ENCODE measurements at regions of chr4 and their contacts with region 1.

Region 1: DNA sequence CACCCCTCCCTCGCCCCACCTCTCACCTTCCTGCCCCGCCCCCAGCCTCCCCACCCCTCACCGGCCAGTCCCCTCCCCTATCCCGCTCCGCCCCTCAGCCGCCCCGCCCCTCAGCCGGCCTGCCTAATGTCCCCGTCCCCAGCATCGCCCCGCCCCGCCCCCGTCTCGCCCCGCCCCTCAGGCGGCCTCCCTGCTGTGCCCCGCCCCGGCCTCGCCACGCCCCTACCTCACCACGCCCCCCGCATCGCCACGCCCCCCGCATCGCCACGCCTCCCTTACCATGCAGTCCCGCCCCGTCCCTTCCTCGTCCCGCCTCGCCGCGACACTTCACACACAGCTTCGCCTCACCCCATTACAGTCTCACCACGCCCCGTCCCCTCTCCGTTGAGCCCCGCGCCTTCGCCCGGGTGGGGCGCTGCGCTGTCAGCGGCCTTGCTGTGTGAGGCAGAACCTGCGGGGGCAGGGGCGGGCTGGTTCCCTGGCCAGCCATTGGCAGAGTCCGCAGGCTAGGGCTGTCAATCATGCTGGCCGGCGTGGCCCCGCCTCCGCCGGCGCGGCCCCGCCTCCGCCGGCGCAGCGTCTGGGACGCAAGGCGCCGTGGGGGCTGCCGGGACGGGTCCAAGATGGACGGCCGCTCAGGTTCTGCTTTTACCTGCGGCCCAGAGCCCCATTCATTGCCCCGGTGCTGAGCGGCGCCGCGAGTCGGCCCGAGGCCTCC is at the starts of genes HTT and HTT-AS:
- DNase-seq: peak; percentile 93 to 99 (median 98)
- ATAC-seq: peak; percentile 84
- H3K4me3 ChIP-seq: peak within 1 kb of the TSS; percentile 80
- H3K4me3 Mint-ChIP-seq: peak within 1 kb of the TSS; percentile 92
- H3K27ac ChIP-seq: peak within 1 kb of the TSS; percentile 72 to 87
- H3K27ac Mint-ChIP-seq: peak within 1 kb of the TSS; percentile 86
- H3K4me1 ChIP-seq: peaks cover 23% of the 10 kb centered on the region
- H3K4me1 Mint-ChIP-seq: peaks cover 26% of the 10 kb centered on the region
- H3K27me3 ChIP-seq: no peaks in the 10 kb centered on the region
- H3K27me3 Mint-ChIP-seq: no peaks in the 10 kb centered on the region
- CTCF ChIP-seq: no peak
- total RNA-seq, gene HTT: 56.9 to 62.6 TPM
- total RNA-seq, gene HTT-AS: not detected

Region 2: DNA sequence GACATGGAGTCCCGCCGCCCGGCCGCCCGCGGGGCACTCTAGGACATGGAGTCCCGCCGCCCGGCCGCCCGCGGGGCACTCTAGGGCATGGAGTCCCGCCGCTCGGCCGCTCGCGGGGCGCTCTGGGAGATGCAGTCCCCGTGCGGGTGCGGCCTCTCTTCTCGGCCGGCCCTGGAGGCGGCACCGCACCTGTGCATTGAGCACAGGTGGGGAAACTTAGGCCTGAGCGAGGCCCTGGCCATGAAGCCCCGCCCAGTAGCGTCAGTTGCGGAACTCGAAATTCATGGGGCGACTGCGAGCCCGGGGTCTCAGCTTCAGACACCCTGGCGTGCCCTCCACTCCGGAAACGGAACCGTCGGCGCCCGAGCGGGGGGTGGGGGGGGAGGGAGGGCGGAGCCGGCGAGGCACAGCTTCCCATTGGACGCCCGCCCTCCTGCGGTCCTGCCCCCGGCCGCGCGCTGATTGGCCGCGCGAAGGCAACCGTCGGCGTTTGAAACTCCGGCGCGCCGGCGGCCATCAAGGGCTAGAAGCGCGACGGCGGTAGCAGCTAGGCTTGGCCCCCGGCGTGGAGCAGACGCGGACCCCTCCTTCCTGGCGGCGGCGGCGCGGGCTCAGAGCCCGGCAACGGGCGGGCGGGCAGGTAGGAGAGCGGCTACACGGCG is 1353.1 kb before region 1 on chr4 and contains the starts of genes TACC3 and TMEM129:
- CTCF ChIA-PET with region 1: no interaction called
- POLR2A ChIA-PET with region 1: no interaction called
- intact Hi-C with region 1: loop called in 1 of 2 experiments (anchors 10 kb)
- DNase-seq: peak; percentile 90 to 99 (median 95)
- ATAC-seq: peak; percentile 80
- H3K4me3 ChIP-seq: peak within 1 kb of the TSS; percentile 53
- H3K4me3 Mint-ChIP-seq: peak within 1 kb of the TSS; percentile 92
- H3K27ac ChIP-seq: peak within 1 kb of the TSS; percentile 85 to 88
- H3K27ac Mint-ChIP-seq: peak within 1 kb of the TSS; percentile 99
- H3K4me1 ChIP-seq: peaks cover 77% of the 10 kb centered on the region
- H3K4me1 Mint-ChIP-seq: peaks cover 56% of the 10 kb centered on the region
- H3K27me3 ChIP-seq: no peaks in the 10 kb centered on the region
- H3K27me3 Mint-ChIP-seq: no peaks in the 10 kb centered on the region
- CTCF ChIP-seq: no peak
- total RNA-seq, gene TACC3: 123 TPM
- total RNA-seq, gene TMEM129: 17.2 to 17.6 TPM

Region 3: GRCh38 chr4:2008875-2009703 is 1065.1 kb before region 1 on chr4 and contains the start of gene NELFA:
- CTCF ChIA-PET with region 1: no interaction called
- POLR2A ChIA-PET with region 1: no interaction called
- intact Hi-C with region 1: loop called in 1 of 2 experiments (anchors 2 kb)
- DNase-seq: peak; percentile 93 to 98 (median 95)
- ATAC-seq: peak; percentile 79
- H3K4me3 ChIP-seq: peak within 1 kb of the TSS; percentile 87
- H3K4me3 Mint-ChIP-seq: peak within 1 kb of the TSS; percentile 98
- H3K27ac ChIP-seq: peak within 1 kb of the TSS; percentile 97 to 99
- H3K27ac Mint-ChIP-seq: peak within 1 kb of the TSS; percentile 95
- H3K4me1 ChIP-seq: peaks cover 31% of the 10 kb centered on the region
- H3K4me1 Mint-ChIP-seq: peaks cover 39% of the 10 kb centered on the region
- H3K27me3 ChIP-seq: no peaks in the 10 kb centered on the region
- H3K27me3 Mint-ChIP-seq: no peaks in the 10 kb centered on the region
- CTCF ChIP-seq: no peak
- total RNA-seq, gene NELFA: 39.9 to 40.1 TPM

Region 4: GRCh38 chr4:3041192-3042142 is 32.8 kb before region 1 on chr4:
- CTCF ChIA-PET with region 1: no interaction called
- POLR2A ChIA-PET with region 1: interaction called, 18 read pairs
- intact Hi-C with region 1: loop called in 1 of 2 experiments (anchors 2 kb)
- DNase-seq: peak in 11 of 14 experiments; percentile 13 to 79 (median 27)
- ATAC-seq: peak; percentile 37
- H3K4me3 ChIP-seq: peak overlapping the region; percentile 58
- H3K4me3 Mint-ChIP-seq: peak overlapping the region; percentile 90
- H3K27ac ChIP-seq: peak overlapping the region in 1 of 2 donors; percentile 51
- H3K27ac Mint-ChIP-seq: peak overlapping the region; percentile 82
- H3K4me1 ChIP-seq: peaks cover 71% of the 10 kb centered on the region
- H3K4me1 Mint-ChIP-seq: peaks cover 54% of the 10 kb centered on the region
- H3K27me3 ChIP-seq: no peaks in the 10 kb centered on the region
- H3K27me3 Mint-ChIP-seq: peaks cover 12% of the 10 kb centered on the region
- CTCF ChIP-seq: no peak

Region 5: GRCh38 chr4:3059943-3060342 is 14.3 kb before region 1 on chr4:
- CTCF ChIA-PET with region 1: no interaction called
- POLR2A ChIA-PET with region 1: no interaction called
- intact Hi-C with region 1: no loop called
- DNase-seq: no peak
- ATAC-seq: no peak
- H3K4me3 ChIP-seq: no peak overlapping the region
- H3K4me3 Mint-ChIP-seq: no peak overlapping the region
- H3K27ac ChIP-seq: no peak overlapping the region
- H3K27ac Mint-ChIP-seq: no peak overlapping the region
- H3K4me1 ChIP-seq: no peaks in the 10 kb centered on the region
- H3K4me1 Mint-ChIP-seq: no peaks in the 10 kb centered on the region
- H3K27me3 ChIP-seq: peaks cover 0 to 3% of the 10 kb centered on the region in 2 experiments
- H3K27me3 Mint-ChIP-seq: peaks cover 4% of the 10 kb centered on the region
- CTCF ChIP-seq: no peak

Region 6: GRCh38 chr4:3292571-3293400 is 218.5 kb after region 1 on chr4 and contains the start of gene RGS12:
- CTCF ChIA-PET with region 1: no interaction called
- POLR2A ChIA-PET with region 1: no interaction called
- intact Hi-C with region 1: loop called in 1 of 2 experiments (anchors 5 kb)
- DNase-seq: peak; percentile 71 to 92 (median 82)
- ATAC-seq: peak; percentile 85
- H3K4me3 ChIP-seq: peak within 1 kb of the TSS; percentile 79
- H3K4me3 Mint-ChIP-seq: peak within 1 kb of the TSS; percentile 95
- H3K27ac ChIP-seq: no peak within 1 kb of the TSS
- H3K27ac Mint-ChIP-seq: peak within 1 kb of the TSS; percentile 78
- H3K4me1 ChIP-seq: peaks cover 29% of the 10 kb centered on the region
- H3K4me1 Mint-ChIP-seq: peaks cover 51% of the 10 kb centered on the region
- H3K27me3 ChIP-seq: peaks cover 0 to 8% of the 10 kb centered on the region in 2 experiments
- H3K27me3 Mint-ChIP-seq: peaks cover 10% of the 10 kb centered on the region
- CTCF ChIP-seq: no peak
- total RNA-seq, gene RGS12: 14.1 to 16.9 TPM